ENCODE measurements at regions of chr1 and their contacts with region 1.

Region 1: GRCh38 chr1:94039514-94039870 is 81.5 kb downstream of the ABCA4 start:
- DNase-seq: peak; percentile 60 to 76 (median 66)
- ATAC-seq: no peak
- H3K4me3 ChIP-seq: no peak overlapping the region
- H3K27ac ChIP-seq: no peak overlapping the region
- H3K4me1 ChIP-seq: peaks cover 3% of the 10 kb centered on the region
- H3K27me3 ChIP-seq: no peaks in the 10 kb centered on the region
- CTCF ChIP-seq: peak; percentile 60 to 92 (median 68)
- POLR2A ChIP-seq: no peak

Region 2: GRCh38 chr1:94111879-94112278 is 72.4 kb after region 1 on chr1:
- intact Hi-C with region 1: no loop called
- DNase-seq: no peak
- ATAC-seq: no peak
- H3K4me3 ChIP-seq: no peak overlapping the region
- H3K27ac ChIP-seq: no peak overlapping the region
- H3K4me1 ChIP-seq: no peaks in the 10 kb centered on the region
- H3K27me3 ChIP-seq: no peaks in the 10 kb centered on the region
- CTCF ChIP-seq: no peak
- POLR2A ChIP-seq: no peak

Region 3: GRCh38 chr1:94191216-94191615 is 151.7 kb after region 1 on chr1:
- intact Hi-C with region 1: no loop called
- DNase-seq: no peak
- ATAC-seq: no peak
- H3K4me3 ChIP-seq: no peak overlapping the region
- H3K27ac ChIP-seq: no peak overlapping the region
- H3K4me1 ChIP-seq: no peaks in the 10 kb centered on the region
- H3K27me3 ChIP-seq: no peaks in the 10 kb centered on the region
- CTCF ChIP-seq: no peak
- POLR2A ChIP-seq: no peak

Region 4: DNA sequence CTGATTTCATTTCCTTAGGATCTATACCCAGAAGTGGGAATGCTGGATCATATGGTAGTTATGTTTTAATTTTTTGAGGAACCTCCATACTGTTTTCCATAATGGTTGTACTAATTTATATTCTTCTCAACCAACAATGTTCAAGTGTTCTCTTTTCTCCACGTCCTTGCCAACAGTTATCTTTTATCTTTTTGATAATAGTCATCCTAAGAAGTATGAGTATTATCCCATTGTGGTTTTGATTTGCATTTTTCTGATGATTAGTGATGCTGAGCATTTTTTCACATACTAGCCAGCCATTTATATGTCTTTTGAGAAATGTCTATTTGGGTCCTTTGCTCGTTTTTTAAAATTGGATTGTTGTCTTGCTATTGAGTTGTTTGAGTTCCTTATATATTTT is 417.2 kb after region 1 on chr1:
- intact Hi-C with region 1: loop called (anchors 10 kb)
- DNase-seq: no peak
- ATAC-seq: no peak
- H3K4me3 ChIP-seq: no peak overlapping the region
- H3K27ac ChIP-seq: no peak overlapping the region
- H3K4me1 ChIP-seq: peaks cover 3% of the 10 kb centered on the region
- H3K27me3 ChIP-seq: no peaks in the 10 kb centered on the region
- CTCF ChIP-seq: no peak
- POLR2A ChIP-seq: no peak

Measured in body of pancreas (tissue), 4 donors.